ENCODE measurements at regions of chr1 and their contacts with region 1.

Region 1: GRCh38 chr1:54996359-54996868 is 2.3 kb upstream of the BSND start:
- H3K4me3 ChIP-seq: no peak overlapping the region
- H3K27ac ChIP-seq: no peak overlapping the region
- H3K4me1 ChIP-seq: no peaks in the 10 kb centered on the region
- CTCF ChIP-seq: peak; percentile 84

Region 2: GRCh38 chr1:54715493-54716298 is 280.7 kb before region 1 on chr1 and contains the start of gene TTC4:
- CTCF ChIA-PET with region 1: no interaction called
- POLR2A ChIA-PET with region 1: no interaction called
- H3K4me3 ChIP-seq: peak within 1 kb of the TSS; percentile 86
- H3K27ac ChIP-seq: peak within 1 kb of the TSS; percentile 14; the same call in 1 of the 2 replicates
- H3K4me1 ChIP-seq: 0 out of 2 replicates have a peak, but pooled peaks cover 2% of the 10 kb centered on the region
- CTCF ChIP-seq: peak; percentile 17; the same call in 1 of the 2 replicates

Region 3: GRCh38 chr1:54934869-54935268 is 61.5 kb before region 1 on chr1:
- CTCF ChIA-PET with region 1: interaction called, 11 read pairs
- POLR2A ChIA-PET with region 1: no interaction called
- H3K4me3 ChIP-seq: no peak overlapping the region
- H3K27ac ChIP-seq: no peak overlapping the region
- H3K4me1 ChIP-seq: no peaks in the 10 kb centered on the region
- CTCF ChIP-seq: no peak

Region 4: DNA sequence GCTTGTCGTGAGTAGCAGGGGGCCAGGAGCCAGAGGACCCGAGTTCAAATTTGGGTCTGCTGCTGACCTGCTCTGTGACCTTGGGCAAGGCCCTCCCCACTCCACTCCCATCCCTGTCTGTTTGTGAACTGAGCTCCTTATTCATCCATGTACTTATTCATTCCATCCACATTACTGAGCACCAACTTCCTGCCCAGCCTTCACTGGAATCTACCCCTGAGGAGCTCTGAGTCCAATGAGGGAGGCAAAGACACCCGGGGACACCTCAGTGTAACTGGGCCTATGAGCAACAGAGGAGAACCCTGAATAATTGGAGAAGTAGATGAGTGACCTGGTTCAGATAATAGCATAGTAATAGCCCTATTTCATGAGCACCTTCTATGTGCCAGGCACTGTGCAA is 11.2 kb after region 1 on chr1:
- CTCF ChIA-PET with region 1: interaction called, 15 read pairs
- POLR2A ChIA-PET with region 1: no interaction called
- H3K4me3 ChIP-seq: no peak overlapping the region
- H3K27ac ChIP-seq: no peak overlapping the region
- H3K4me1 ChIP-seq: no peaks in the 10 kb centered on the region
- CTCF ChIP-seq: no peak

Region 5: GRCh38 chr1:55015731-55016620 is 19.6 kb after region 1 on chr1:
- CTCF ChIA-PET with region 1: interaction called, 24 read pairs
- POLR2A ChIA-PET with region 1: no interaction called
- H3K4me3 ChIP-seq: no peak overlapping the region
- H3K27ac ChIP-seq: no peak overlapping the region
- H3K4me1 ChIP-seq: no peaks in the 10 kb centered on the region
- CTCF ChIP-seq: no peak

Region 6: DNA sequence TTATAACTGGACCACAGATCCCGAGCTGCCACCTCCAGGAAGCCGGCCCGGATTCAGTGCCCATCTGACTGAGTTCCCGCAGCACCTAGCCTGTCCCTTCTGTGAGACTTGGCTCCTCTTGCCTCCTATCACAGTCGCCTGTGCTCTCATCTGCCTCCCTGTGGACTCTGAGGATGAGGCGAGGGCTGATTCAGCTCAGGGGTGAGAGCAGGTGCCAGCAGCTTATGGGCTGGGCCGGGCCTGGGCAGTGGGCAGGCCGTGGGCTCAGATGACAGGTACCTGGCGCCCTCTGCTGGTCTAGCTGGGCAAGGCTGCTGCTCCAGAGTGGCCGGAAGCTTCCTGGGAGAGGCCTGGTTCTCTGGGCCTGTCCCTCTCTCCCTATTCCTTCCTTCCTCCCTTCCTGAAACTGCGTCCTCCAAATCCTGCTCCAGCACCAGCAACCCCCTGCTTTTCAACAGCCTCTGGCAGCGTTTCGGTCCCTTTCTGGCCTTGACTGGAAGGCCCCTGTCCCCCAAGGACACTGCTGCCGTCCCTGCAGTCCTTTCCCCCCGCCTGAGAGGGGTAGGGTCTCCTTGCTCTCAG is 25.6 kb after region 1 on chr1:
- CTCF ChIA-PET with region 1: interaction called, 24 read pairs
- POLR2A ChIA-PET with region 1: no interaction called
- H3K4me3 ChIP-seq: no peak overlapping the region
- H3K27ac ChIP-seq: no peak overlapping the region
- H3K4me1 ChIP-seq: no peaks in the 10 kb centered on the region
- CTCF ChIP-seq: peak; percentile 98

Region 7: DNA sequence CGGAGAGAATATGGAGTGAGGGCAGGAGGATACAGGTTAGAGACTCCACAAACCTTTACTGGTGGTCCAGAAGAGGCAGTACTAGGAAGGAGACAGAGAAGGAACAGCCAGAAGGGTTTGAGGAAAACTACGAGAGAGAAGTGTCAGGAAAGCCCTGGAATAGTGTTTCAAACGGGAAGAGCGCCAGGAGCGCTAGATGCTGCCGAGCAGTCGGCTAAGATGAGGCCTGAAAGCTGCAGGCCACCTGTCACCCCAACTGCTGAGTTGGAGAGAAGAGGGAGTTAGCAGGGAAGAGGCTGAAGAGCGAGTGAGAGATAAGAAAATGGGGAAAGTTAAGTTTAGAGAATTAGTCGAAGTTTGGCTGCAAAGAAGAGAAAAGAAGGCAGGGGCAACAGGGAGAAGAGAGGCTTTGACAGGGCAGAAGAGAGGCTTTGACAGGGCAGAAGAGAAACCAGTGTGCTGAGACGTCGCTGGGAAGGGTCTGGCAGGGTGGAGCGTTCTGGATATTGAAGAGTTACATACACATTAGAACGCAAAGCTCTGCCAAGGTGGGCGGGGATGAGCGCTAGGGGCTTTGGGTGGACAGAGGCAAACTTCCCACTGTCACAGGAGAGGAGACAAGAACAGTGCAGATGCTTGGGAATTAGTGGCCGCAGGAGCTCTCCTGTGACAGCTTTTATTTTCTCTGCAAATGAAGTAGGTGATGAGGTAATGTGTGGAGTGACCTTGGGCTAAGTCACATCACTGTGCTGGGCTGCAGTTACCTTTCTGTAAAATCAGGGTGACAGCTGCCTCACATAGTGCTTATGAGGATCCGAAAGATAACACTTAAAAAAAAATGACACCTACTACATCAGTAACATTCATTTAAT is 74.1 kb after region 1 on chr1:
- CTCF ChIA-PET with region 1: no interaction called
- POLR2A ChIA-PET with region 1: no interaction called
- H3K4me3 ChIP-seq: no peak overlapping the region
- H3K27ac ChIP-seq: no peak overlapping the region
- H3K4me1 ChIP-seq: no peaks in the 10 kb centered on the region
- CTCF ChIP-seq: no peak

Region 8: DNA sequence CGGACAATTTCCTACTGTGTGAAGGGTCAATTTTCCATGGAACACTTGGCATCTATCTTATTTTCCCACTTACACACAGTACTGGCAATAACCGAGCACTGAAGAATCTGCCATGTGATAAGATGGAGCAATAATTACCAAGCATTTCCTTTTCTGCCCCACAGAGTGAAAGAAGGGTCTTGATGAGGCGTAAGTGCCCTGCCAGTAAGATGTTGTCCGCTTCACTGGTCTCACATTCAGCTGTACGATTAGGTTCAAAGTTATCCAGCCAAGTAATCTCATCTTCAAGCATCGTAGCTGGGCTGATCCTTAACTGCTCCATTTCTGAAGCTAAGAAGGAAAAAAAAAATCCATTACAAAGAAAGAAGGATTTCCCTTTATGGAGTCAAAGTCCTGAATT is 110.7 kb after region 1 on chr1:
- CTCF ChIA-PET with region 1: no interaction called
- POLR2A ChIA-PET with region 1: no interaction called
- H3K4me3 ChIP-seq: no peak overlapping the region
- H3K27ac ChIP-seq: no peak overlapping the region
- H3K4me1 ChIP-seq: no peaks in the 10 kb centered on the region
- CTCF ChIP-seq: no peak

Measured in HEK293 (cell line).